ENCODE measurements at regions of chr16 and their contacts with region 1.

Region 1: DNA sequence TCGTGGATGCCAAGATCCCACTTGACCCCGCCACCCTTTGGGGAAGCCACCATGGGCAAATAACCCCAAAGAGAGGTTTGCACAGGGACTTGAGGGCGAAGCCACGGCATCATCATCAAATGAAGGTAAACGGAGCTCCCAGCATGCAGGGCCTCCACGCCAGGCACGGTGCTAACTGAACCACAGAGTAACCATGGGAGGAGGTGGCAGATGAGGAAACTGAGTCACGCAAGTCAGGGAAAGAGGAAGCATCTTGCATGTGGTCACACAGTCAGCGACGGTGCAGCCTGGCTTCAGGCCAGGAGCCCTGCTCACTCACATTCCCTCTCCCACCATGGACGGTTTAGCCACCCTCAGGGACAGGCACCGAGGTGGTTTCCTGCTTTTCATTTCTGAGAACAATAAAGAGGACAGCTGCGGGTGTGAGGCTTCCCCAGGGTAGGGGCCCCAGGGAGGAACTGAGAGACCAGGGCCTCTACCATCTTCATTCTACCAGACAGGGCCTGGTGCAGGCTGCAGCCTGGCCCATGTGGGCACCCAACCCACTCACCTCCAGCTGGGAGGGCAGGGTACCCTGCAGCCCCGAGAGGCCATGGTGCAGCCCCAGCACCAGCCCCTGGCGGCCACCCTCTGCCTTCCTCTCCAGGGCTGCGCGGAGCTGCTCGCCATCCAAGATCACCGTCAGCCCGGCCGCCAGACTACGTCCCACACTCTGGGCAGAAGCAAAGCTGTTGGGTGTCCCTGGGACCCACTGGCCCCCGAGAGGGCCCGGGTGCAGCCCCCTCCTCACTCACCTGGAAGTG is 78.3 kb downstream of the RMI2 start:
- DNase-seq: no peak
- ATAC-seq: no peak
- H3K4me3 ChIP-seq: no peak overlapping the region
- H3K27ac ChIP-seq: no peak overlapping the region
- H3K4me1 ChIP-seq: no peaks in the 10 kb centered on the region
- H3K27me3 ChIP-seq: no peaks in the 10 kb centered on the region
- CTCF ChIP-seq: no peak

Region 2: DNA sequence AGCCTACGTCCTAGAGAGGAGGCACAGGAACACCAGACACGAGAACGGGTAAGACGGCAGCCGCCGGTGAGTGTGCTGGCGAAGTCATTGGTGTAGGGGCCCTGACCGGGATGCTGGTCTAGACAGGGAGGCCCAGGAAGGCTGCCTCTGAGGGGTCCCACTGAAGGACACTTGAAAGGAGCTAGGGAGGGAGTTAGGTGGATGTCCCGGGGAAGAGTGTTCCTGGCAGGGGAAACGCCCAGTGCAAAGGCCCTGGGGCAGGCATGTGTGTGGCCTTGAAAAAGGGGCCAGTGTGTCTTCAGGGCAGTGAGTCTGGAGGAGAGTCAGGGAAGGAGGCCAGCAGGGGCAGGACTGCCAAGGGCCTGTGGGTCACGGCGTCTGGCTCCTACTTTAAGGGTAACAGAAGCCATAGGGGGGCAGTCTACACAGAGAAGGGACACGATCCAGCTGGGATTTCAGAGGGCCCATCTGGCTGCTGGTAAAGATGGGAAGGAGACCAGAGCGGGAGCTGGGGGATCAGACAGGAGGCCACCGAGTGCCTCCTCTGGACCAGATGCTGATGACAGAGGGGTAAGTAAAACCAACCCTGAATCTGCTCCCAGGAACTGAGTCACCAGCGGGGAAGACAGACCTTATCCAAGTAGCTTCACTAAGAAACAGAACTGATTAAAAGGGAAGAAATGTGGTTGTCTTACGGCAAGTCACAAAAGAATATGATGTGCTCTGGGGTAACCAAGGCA is 47.3 kb after region 1 on chr16:
- intact Hi-C with region 1: loop called in 1 of 2 experiments (anchors 5 kb)
- DNase-seq: no peak
- ATAC-seq: peak in 1 of 4 donors; percentile 49
- H3K4me3 ChIP-seq: no peak overlapping the region
- H3K27ac ChIP-seq: no peak overlapping the region
- H3K4me1 ChIP-seq: no peaks in the 10 kb centered on the region
- H3K27me3 ChIP-seq: no peaks in the 10 kb centered on the region
- CTCF ChIP-seq: no peak